ENCODE measurements at regions of chr1 and their contacts with region 1.

Region 1: GRCh38 chr1:108199781-108200570 is at the start of gene SLC25A24:
- DNase-seq: peak; percentile 58 to 83 (median 71)
- ATAC-seq: peak; percentile 96
- H3K4me3 ChIP-seq: peak within 1 kb of the TSS; percentile 75
- H3K4me3 Mint-ChIP-seq: peak within 1 kb of the TSS; percentile 69 to 93 (median 88)
- H3K27ac ChIP-seq: peak within 1 kb of the TSS; percentile 65
- H3K27ac Mint-ChIP-seq: peak within 1 kb of the TSS; percentile 52 to 87 (median 82)
- H3K4me1 ChIP-seq: peaks cover 3 to 16% of the 10 kb centered on the region in 2 donors
- H3K4me1 Mint-ChIP-seq: peaks cover 18 to 42% (median 30%) of the 10 kb centered on the region in 7 donors
- H3K27me3 ChIP-seq: no peaks in the 10 kb centered on the region
- H3K27me3 Mint-ChIP-seq: peaks cover 0 to 18% (median 0%) of the 10 kb centered on the region in 5 donors
- total RNA-seq, gene SLC25A24: 7.1 to 27.2 (median 10.2) TPM

Region 2: DNA sequence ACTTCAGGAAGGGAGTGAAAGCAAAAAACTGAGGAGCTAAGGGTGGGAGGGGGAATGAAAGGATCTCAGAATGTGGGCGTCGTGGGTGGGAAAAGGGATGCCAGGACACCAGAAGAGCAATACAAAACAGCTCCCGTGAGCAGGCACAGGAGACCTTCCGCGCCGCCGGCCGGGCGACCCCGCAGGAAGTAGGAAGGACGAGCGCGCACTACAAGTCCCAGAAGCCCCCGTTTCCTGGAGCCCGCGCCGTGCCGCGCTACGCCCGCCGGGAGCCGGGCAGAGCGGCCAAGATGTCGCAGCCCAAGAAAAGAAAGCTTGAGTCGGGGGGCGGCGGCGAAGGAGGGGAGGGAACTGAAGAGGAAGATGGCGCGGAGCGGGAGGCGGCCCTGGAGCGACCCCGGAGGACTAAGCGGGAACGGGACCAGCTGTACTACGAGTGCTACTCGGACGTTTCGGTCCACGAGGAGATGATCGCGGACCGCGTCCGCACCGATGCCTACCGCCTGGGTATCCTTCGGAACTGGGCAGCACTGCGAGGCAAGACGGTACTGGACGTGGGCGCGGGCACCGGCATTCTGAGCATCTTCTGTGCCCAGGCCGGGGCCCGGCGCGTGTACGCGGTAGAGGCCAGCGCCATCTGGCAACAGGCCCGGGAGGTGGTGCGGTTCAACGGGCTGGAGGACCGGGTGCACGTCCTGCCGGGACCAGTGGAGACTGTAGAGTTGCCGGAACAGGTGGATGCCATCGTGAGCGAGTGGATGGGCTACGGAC is 1143.4 kb before region 1 on chr1 and contains the start of gene PRMT6:
- CTCF ChIA-PET with region 1: no interaction called
- POLR2A ChIA-PET with region 1: no interaction called
- intact Hi-C with region 1: loop called (anchors 2 to 5 kb)
- DNase-seq: peak; percentile 62 to 85 (median 82)
- ATAC-seq: peak; percentile 94
- H3K4me3 ChIP-seq: peak within 1 kb of the TSS; percentile 95
- H3K4me3 Mint-ChIP-seq: peak within 1 kb of the TSS; percentile 96 to 100 (median 98)
- H3K27ac ChIP-seq: peak within 1 kb of the TSS; percentile 80
- H3K27ac Mint-ChIP-seq: peak within 1 kb of the TSS; percentile 95 to 98 (median 97)
- H3K4me1 ChIP-seq: peaks cover 11 to 12% of the 10 kb centered on the region in 2 donors
- H3K4me1 Mint-ChIP-seq: peaks cover 19 to 41% (median 29%) of the 10 kb centered on the region in 7 donors
- H3K27me3 ChIP-seq: no peaks in the 10 kb centered on the region
- H3K27me3 Mint-ChIP-seq: no peaks in the 10 kb centered on the region
- total RNA-seq, gene PRMT6: 7.4 to 22.1 (median 17.5) TPM

Region 3: DNA sequence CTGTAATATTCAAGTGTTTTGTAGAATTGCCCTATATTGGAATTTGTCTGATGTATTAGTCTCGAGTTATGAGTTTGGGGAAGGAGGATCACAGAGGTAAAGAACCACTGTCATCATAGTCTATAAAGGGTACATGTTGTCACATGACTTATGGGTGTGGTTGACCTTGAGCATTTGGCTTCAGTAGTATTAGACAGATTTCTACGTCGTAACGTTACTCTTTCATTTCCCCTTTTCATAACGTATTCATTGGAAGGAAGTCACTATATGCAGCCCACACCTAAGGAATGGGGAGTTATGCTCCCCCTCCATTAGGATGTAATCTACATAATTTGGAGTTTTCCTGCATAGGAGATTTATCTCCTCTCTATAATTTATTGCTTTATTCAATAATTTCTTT is 124.9 kb before region 1 on chr1:
- CTCF ChIA-PET with region 1: no interaction called
- POLR2A ChIA-PET with region 1: no interaction called
- intact Hi-C with region 1: loop called in 1 of 2 experiments (anchors 2 kb)
- DNase-seq: no peak
- ATAC-seq: peak; percentile 58
- H3K4me3 ChIP-seq: no peak overlapping the region
- H3K4me3 Mint-ChIP-seq: no peak overlapping the region
- H3K27ac ChIP-seq: no peak overlapping the region
- H3K27ac Mint-ChIP-seq: peak overlapping the region in 2 of 9 donors; percentile 21 to 78
- H3K4me1 ChIP-seq: peaks cover 28 to 37% of the 10 kb centered on the region in 2 donors
- H3K4me1 Mint-ChIP-seq: peaks cover 24 to 60% (median 47%) of the 10 kb centered on the region in 7 donors
- H3K27me3 ChIP-seq: no peaks in the 10 kb centered on the region
- H3K27me3 Mint-ChIP-seq: no peaks in the 10 kb centered on the region

Region 4: DNA sequence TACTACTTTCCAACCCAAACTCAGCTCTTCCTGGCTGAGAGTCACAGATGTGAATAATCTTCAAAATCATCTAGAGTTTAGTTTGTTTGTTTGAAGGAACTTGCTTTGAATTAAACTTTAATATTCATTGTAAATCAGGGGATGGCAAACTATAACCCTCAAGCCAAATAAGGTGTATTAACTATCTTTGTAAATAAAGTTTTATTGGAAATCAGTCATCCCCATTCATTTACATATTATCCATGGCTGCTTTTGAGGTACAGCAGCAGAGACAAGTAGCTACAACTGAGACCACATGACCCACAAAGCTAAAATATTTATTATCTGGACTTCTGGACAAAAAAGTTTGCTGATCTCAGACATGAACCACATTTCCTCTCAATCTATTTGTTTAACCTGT is 15.5 kb before region 1 on chr1:
- CTCF ChIA-PET with region 1: no interaction called
- POLR2A ChIA-PET with region 1: interaction called, 4 read pairs
- intact Hi-C with region 1: loop called in 1 of 2 experiments (anchors 2 kb)
- DNase-seq: no peak
- ATAC-seq: no peak
- H3K4me3 ChIP-seq: no peak overlapping the region
- H3K4me3 Mint-ChIP-seq: no peak overlapping the region
- H3K27ac ChIP-seq: no peak overlapping the region
- H3K27ac Mint-ChIP-seq: no peak overlapping the region
- H3K4me1 ChIP-seq: no peaks in the 10 kb centered on the region
- H3K4me1 Mint-ChIP-seq: peaks cover 0 to 14% (median 0%) of the 10 kb centered on the region in 7 donors
- H3K27me3 ChIP-seq: no peaks in the 10 kb centered on the region
- H3K27me3 Mint-ChIP-seq: no peaks in the 10 kb centered on the region

Region 5: GRCh38 chr1:108816049-108816893 is 616.3 kb after region 1 on chr1:
- CTCF ChIA-PET with region 1: no interaction called
- POLR2A ChIA-PET with region 1: no interaction called
- intact Hi-C with region 1: no loop called
- DNase-seq: no peak
- ATAC-seq: no peak
- H3K4me3 ChIP-seq: no peak overlapping the region
- H3K4me3 Mint-ChIP-seq: no peak overlapping the region
- H3K27ac ChIP-seq: no peak overlapping the region
- H3K27ac Mint-ChIP-seq: no peak overlapping the region
- H3K4me1 ChIP-seq: no peaks in the 10 kb centered on the region
- H3K4me1 Mint-ChIP-seq: no peaks in the 10 kb centered on the region
- H3K27me3 ChIP-seq: no peaks in the 10 kb centered on the region
- H3K27me3 Mint-ChIP-seq: peaks cover 0 to 36% (median 7%) of the 10 kb centered on the region in 5 donors

Region 6: GRCh38 chr1:108843390-108844137 is 643.6 kb after region 1 on chr1:
- CTCF ChIA-PET with region 1: no interaction called
- POLR2A ChIA-PET with region 1: no interaction called
- intact Hi-C with region 1: no loop called
- DNase-seq: no peak
- ATAC-seq: no peak
- H3K4me3 ChIP-seq: no peak overlapping the region
- H3K4me3 Mint-ChIP-seq: no peak overlapping the region
- H3K27ac ChIP-seq: no peak overlapping the region
- H3K27ac Mint-ChIP-seq: no peak overlapping the region
- H3K4me1 ChIP-seq: no peaks in the 10 kb centered on the region
- H3K4me1 Mint-ChIP-seq: peaks cover 0 to 4% (median 0%) of the 10 kb centered on the region in 7 donors
- H3K27me3 ChIP-seq: no peaks in the 10 kb centered on the region
- H3K27me3 Mint-ChIP-seq: peaks cover 0 to 36% (median 0%) of the 10 kb centered on the region in 5 donors

Region 7: GRCh38 chr1:109099938-109100773 is 900.2 kb after region 1 on chr1:
- CTCF ChIA-PET with region 1: no interaction called
- POLR2A ChIA-PET with region 1: interaction called, 5 read pairs
- intact Hi-C with region 1: loop called in 1 of 2 experiments (anchors 5 kb)
- DNase-seq: peak; percentile 90 to 98 (median 97)
- ATAC-seq: peak; percentile 98
- H3K4me3 ChIP-seq: peak overlapping the region; percentile 80
- H3K4me3 Mint-ChIP-seq: peak overlapping the region; percentile 93 to 99 (median 98)
- H3K27ac ChIP-seq: peak overlapping the region; percentile 88
- H3K27ac Mint-ChIP-seq: peak overlapping the region; percentile 92 to 99 (median 96)
- H3K4me1 ChIP-seq: peaks cover 0 to 5% of the 10 kb centered on the region in 2 donors
- H3K4me1 Mint-ChIP-seq: peaks cover 5 to 22% (median 13%) of the 10 kb centered on the region in 7 donors
- H3K27me3 ChIP-seq: no peaks in the 10 kb centered on the region
- H3K27me3 Mint-ChIP-seq: peaks cover 0 to 2% (median 0%) of the 10 kb centered on the region in 5 donors